ENCODE measurements at regions of chr2 and their contacts with region 1.

Region 1: DNA sequence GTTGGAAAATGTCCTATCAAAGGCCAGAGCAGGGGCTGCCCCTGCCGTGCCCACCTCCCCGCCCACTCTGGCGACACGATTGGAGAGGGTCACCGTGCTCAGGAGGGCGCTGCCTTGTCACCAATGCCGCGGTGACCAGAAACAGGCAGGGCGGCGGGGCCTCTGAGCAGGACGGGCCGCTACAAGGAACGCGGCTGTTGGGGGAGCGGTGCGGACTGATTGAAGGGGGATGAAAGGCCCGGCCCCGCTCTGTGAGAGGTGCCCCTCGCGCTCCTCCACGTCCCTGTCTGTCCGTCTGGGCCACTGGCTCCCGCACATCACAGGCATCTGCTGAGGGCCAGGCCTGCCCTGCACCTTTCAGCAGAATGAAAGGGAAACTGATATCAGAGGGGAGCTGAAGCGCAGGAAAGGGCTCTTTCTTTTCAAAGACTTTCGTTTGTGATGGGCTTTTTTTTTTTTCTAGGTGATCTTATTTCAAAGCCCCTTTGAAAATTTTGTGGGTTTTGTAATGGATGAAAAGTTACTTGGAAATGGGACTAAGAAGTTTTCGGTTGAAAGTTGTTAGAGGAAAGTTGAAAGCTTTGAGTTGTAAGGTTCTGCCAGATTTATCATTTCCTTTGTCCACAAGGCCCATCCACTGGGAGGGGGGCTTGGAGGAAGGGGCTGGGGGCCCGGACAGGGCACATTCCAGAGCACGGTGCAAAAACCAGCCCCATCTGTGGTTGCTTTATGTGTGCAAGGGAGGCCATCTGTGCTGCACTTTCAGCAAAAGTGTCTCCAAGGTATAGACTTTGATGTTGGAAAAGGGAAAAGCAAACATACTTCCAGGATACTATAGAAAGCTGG is 244.2 kb downstream of the KLHL29 start:
- DNase-seq: no peak
- ATAC-seq: no peak
- H3K4me3 ChIP-seq: no peak overlapping the region
- H3K27ac ChIP-seq: no peak overlapping the region
- H3K4me1 ChIP-seq: no peaks in the 10 kb centered on the region
- H3K27me3 ChIP-seq: no peaks in the 10 kb centered on the region
- CTCF ChIP-seq: no peak

Region 2: DNA sequence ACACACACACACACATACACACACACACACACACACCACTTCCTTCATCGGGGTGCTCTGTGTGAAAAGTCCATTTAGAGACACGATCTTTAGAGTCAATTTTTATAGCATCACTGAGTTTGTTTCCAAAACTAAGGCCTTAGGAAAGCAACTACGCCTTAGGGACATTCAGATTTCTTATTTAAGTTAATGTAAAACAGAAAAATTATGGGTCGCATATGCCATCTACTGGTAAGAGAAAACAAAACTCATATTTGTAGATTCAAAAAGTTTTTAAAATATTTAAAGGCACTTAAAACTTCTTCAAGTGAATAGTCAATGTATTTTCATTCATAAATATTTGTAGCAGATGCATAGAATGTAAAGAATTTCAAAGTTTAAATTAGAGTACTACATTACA is 131.6 kb after region 1 on chr2:
- intact Hi-C with region 1: loop called in 1 of 10 experiments (anchors 5 kb)
- DNase-seq: no peak
- ATAC-seq: no peak
- H3K4me3 ChIP-seq: no peak overlapping the region
- H3K27ac ChIP-seq: peak overlapping the region in 1 of 10 donors; percentile 44
- H3K4me1 ChIP-seq: peaks cover 0 to 30% (median 13%) of the 10 kb centered on the region in 9 donors
- H3K27me3 ChIP-seq: no peaks in the 10 kb centered on the region
- CTCF ChIP-seq: peak in 6 of 9 donors; percentile 23 to 54 (median 41)

Measured in heart right ventricle (tissue), 16 donors.